CD4-positive, alpha-beta memory T cell (primary cell): ENCODE measurements at regions of chr2 and their contacts with region 1.

Region 1: GRCh38 chr2:197310271-197310985 is at the start of gene ANKRD44:
- DNase-seq: peak; percentile 91 to 94 (median 94)
- H3K4me3 ChIP-seq: peak within 1 kb of the TSS; percentile 65 to 87
- H3K4me3 Mint-ChIP-seq: peak within 1 kb of the TSS; percentile 91 to 97 (median 95)
- H3K27ac ChIP-seq: peak within 1 kb of the TSS; percentile 93
- H3K27ac Mint-ChIP-seq: peak within 1 kb of the TSS; percentile 94 to 97 (median 96)
- H3K4me1 ChIP-seq: peaks cover 55% of the 10 kb centered on the region
- H3K4me1 Mint-ChIP-seq: peaks cover 46 to 74% (median 56%) of the 10 kb centered on the region in 4 donors
- H3K27me3 ChIP-seq: no peaks in the 10 kb centered on the region
- H3K27me3 Mint-ChIP-seq: no peaks in the 10 kb centered on the region
- total RNA-seq, gene ANKRD44: 229 to 248 TPM

Region 2: GRCh38 chr2:197011799-197012641 is 298.4 kb before region 1 on chr2:
- CTCF ChIA-PET with region 1: interaction called, 3 read pairs
- POLR2A ChIA-PET with region 1: no interaction called
- intact Hi-C with region 1: loop called (anchors 5 kb)
- DNase-seq: peak in 4 of 5 donors; percentile 28 to 43 (median 37)
- H3K4me3 ChIP-seq: no peak overlapping the region
- H3K4me3 Mint-ChIP-seq: no peak overlapping the region
- H3K27ac ChIP-seq: no peak overlapping the region
- H3K27ac Mint-ChIP-seq: peak overlapping the region; percentile 50 to 80 (median 68)
- H3K4me1 ChIP-seq: no peaks in the 10 kb centered on the region
- H3K4me1 Mint-ChIP-seq: peaks cover 3 to 10% (median 9%) of the 10 kb centered on the region in 4 donors
- H3K27me3 ChIP-seq: no peaks in the 10 kb centered on the region
- H3K27me3 Mint-ChIP-seq: no peaks in the 10 kb centered on the region

Region 3: DNA sequence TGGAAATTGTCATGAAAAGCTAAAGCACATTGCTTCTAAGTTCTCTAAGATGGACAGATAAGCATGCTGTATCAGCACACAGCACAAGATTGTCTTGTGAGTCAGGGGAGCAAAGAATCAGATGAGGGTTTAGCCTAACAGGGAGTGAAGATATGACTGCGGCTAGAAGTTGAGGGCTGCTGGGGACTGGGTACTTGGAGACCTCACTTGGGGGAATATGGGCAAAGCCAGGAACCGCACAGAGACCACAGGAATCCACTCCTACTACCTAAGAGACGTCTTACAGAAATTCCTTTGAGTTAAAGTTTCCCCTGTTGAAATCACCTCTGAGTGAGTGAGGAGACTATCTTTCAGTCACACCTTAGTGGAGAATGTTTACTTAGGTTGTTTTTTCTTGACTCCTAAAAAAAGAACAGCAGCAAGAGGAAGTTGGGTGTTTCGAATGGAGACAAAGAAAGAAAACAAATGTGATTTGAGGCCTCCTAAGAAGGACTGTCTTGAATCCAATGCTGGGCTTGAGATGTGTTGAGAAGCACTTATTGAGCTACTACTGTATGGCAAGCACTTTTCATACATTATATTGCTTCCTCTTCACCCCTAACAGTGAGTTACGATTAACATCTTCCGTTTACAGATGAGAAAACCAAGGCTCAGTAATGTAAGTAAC is 100.6 kb before region 1 on chr2:
- CTCF ChIA-PET with region 1: interaction called, 97 read pairs
- POLR2A ChIA-PET with region 1: interaction called, 1,065 read pairs
- intact Hi-C with region 1: loop called (anchors 1 kb)
- DNase-seq: peak in 4 of 5 donors; percentile 37 to 86 (median 40)
- H3K4me3 ChIP-seq: peak overlapping the region in 1 of 2 donors; percentile 12
- H3K4me3 Mint-ChIP-seq: peak overlapping the region; percentile 38 to 88 (median 74)
- H3K27ac ChIP-seq: peak overlapping the region; percentile 68
- H3K27ac Mint-ChIP-seq: peak overlapping the region; percentile 88 to 100 (median 98)
- H3K4me1 ChIP-seq: peaks cover 100% of the 10 kb centered on the region
- H3K4me1 Mint-ChIP-seq: peaks cover 84 to 100% (median 93%) of the 10 kb centered on the region in 4 donors
- H3K27me3 ChIP-seq: no peaks in the 10 kb centered on the region
- H3K27me3 Mint-ChIP-seq: peaks cover 0 to 3% of the 10 kb centered on the region in 2 donors

Region 4: GRCh38 chr2:197255543-197255942 is 54.9 kb before region 1 on chr2:
- CTCF ChIA-PET with region 1: interaction called, 17 read pairs
- POLR2A ChIA-PET with region 1: interaction called, 606 read pairs
- intact Hi-C with region 1: loop called (anchors 1 kb)
- DNase-seq: peak; percentile 64 to 92 (median 74)
- H3K4me3 ChIP-seq: peak overlapping the region in 1 of 2 donors; percentile 12
- H3K4me3 Mint-ChIP-seq: peak overlapping the region; percentile 61 to 92 (median 82)
- H3K27ac ChIP-seq: peak overlapping the region; percentile 70
- H3K27ac Mint-ChIP-seq: peak overlapping the region; percentile 93 to 98 (median 96)
- H3K4me1 ChIP-seq: peaks cover 86% of the 10 kb centered on the region
- H3K4me1 Mint-ChIP-seq: peaks cover 59 to 80% (median 69%) of the 10 kb centered on the region in 4 donors
- H3K27me3 ChIP-seq: no peaks in the 10 kb centered on the region
- H3K27me3 Mint-ChIP-seq: no peaks in the 10 kb centered on the region

Region 5: GRCh38 chr2:197286805-197287598 is 23.4 kb before region 1 on chr2:
- CTCF ChIA-PET with region 1: interaction called, 5 read pairs
- POLR2A ChIA-PET with region 1: interaction called, 265 read pairs
- intact Hi-C with region 1: loop called (anchors 2 kb)
- DNase-seq: peak; percentile 66 to 85 (median 76)
- H3K4me3 ChIP-seq: no peak overlapping the region
- H3K4me3 Mint-ChIP-seq: peak overlapping the region; percentile 68 to 85 (median 82)
- H3K27ac ChIP-seq: peak overlapping the region; percentile 22
- H3K27ac Mint-ChIP-seq: peak overlapping the region; percentile 67 to 99 (median 96)
- H3K4me1 ChIP-seq: peaks cover 99% of the 10 kb centered on the region
- H3K4me1 Mint-ChIP-seq: peaks cover 52 to 88% (median 70%) of the 10 kb centered on the region in 4 donors
- H3K27me3 ChIP-seq: no peaks in the 10 kb centered on the region
- H3K27me3 Mint-ChIP-seq: no peaks in the 10 kb centered on the region

Region 6: GRCh38 chr2:197356136-197356535 is 45.7 kb after region 1 on chr2:
- CTCF ChIA-PET with region 1: interaction called, 13 read pairs
- POLR2A ChIA-PET with region 1: interaction called, 6 read pairs
- intact Hi-C with region 1: loop called (anchors 5 kb)
- DNase-seq: peak in 4 of 5 donors; percentile 7 to 28 (median 21)
- H3K4me3 ChIP-seq: no peak overlapping the region
- H3K4me3 Mint-ChIP-seq: peak overlapping the region in 6 of 8 donors; percentile 33 to 77 (median 48)
- H3K27ac ChIP-seq: no peak overlapping the region
- H3K27ac Mint-ChIP-seq: peak overlapping the region in 2 of 7 donors; percentile 40 to 66
- H3K4me1 ChIP-seq: peaks cover 12% of the 10 kb centered on the region
- H3K4me1 Mint-ChIP-seq: peaks cover 12 to 21% (median 16%) of the 10 kb centered on the region in 4 donors
- H3K27me3 ChIP-seq: no peaks in the 10 kb centered on the region
- H3K27me3 Mint-ChIP-seq: no peaks in the 10 kb centered on the region